Common myeloid progenitor, CD34-positive (primary cell): ENCODE measurements at regions of chr6 and their contacts with region 1.

Region 1: GRCh38 chr6:36765594-36766398 is 68.2 kb downstream of the RAB44 start:
- DNase-seq: peak; percentile 85 to 91 (median 87)
- H3K4me3 ChIP-seq: no peak overlapping the region
- H3K27ac ChIP-seq: no peak overlapping the region
- H3K4me1 ChIP-seq: peaks cover 5 to 27% (median 21%) of the 10 kb centered on the region in 4 experiments
- H3K27me3 ChIP-seq: no peaks in the 10 kb centered on the region

Region 2: GRCh38 chr6:36780442-36781177 is 14.8 kb after region 1 on chr6:
- CTCF ChIA-PET with region 1: interaction called, 59 read pairs
- POLR2A ChIA-PET with region 1: interaction called, 3 read pairs
- DNase-seq: peak; percentile 28 to 83 (median 79)
- H3K4me3 ChIP-seq: no peak overlapping the region
- H3K27ac ChIP-seq: no peak overlapping the region
- H3K4me1 ChIP-seq: peaks cover 4 to 28% (median 10%) of the 10 kb centered on the region in 4 experiments
- H3K27me3 ChIP-seq: peaks cover 0 to 5% (median 0%) of the 10 kb centered on the region in 5 experiments

Region 3: DNA sequence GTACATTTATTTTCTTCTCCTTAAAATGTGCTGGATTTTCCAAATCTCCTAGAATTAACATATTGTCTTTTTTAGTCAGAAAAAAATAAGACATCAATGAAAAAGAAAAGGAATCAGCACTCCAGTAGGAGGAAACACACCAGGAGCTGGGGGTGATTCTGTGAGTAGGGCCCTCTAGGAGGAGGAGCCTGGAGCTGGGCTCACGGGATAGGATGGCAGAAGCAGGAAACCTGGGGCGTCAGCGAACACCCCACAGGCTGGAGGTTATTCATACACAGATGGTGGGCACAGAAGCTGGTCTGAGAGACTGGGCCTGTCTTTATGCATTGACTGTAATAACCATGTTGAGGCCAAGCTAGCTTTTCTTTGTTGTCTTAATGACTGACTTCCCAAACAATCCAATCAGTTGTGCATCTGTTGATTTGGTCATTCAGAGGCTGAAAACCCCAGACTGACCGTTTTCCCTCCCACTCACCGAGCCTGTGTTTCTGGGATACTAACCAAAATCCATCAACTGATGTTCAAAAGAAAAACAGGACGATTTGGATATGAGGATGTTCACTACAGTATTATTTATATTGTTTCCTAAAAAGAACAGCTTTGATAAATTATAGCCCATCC is 20.4 kb after region 1 on chr6:
- CTCF ChIA-PET with region 1: interaction called, 59 read pairs
- POLR2A ChIA-PET with region 1: interaction called, 3 read pairs
- DNase-seq: no peak
- H3K4me3 ChIP-seq: no peak overlapping the region
- H3K27ac ChIP-seq: no peak overlapping the region
- H3K4me1 ChIP-seq: peaks cover 0 to 8% (median 1%) of the 10 kb centered on the region in 4 experiments
- H3K27me3 ChIP-seq: peaks cover 0 to 10% (median 6%) of the 10 kb centered on the region in 5 experiments

Region 4: DNA sequence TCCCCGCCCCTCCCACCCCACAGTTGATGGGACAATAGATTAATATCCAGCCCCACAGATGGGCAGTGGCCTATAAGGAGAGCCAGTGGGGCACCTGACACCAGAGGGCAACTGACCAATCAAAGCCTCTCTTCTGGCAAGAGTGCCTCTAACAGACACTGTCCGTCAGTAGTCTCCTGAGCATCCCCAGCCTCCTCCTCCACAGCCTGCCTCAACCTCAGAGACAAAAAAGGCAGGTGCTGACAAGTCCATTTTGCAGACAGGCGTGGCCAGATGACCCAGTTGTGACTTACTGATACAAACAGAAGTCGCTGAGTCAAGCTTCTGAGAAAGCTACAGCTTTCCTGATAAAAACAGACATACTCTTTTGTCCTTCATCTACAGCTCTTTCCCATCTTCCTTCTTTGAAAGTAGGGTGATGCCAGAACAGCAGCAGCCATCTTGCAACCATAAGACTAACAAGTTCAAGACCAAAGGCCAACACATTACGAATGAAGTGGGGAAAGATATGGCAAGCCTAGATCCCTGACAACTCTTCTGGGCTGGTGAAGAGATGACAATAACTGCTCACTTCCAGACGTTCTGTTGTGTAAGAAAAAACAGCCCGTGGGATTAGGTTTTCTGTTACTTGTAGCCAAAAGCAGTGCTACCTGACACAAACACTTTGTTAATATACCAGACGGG is 96.5 kb after region 1 on chr6:
- CTCF ChIA-PET with region 1: interaction called, 16 read pairs
- POLR2A ChIA-PET with region 1: interaction called, 4 read pairs
- DNase-seq: no peak
- H3K4me3 ChIP-seq: no peak overlapping the region
- H3K27ac ChIP-seq: peak overlapping the region in 1 of 2 experiments; percentile 62
- H3K4me1 ChIP-seq: no peaks in the 10 kb centered on the region
- H3K27me3 ChIP-seq: no peaks in the 10 kb centered on the region

Region 5: DNA sequence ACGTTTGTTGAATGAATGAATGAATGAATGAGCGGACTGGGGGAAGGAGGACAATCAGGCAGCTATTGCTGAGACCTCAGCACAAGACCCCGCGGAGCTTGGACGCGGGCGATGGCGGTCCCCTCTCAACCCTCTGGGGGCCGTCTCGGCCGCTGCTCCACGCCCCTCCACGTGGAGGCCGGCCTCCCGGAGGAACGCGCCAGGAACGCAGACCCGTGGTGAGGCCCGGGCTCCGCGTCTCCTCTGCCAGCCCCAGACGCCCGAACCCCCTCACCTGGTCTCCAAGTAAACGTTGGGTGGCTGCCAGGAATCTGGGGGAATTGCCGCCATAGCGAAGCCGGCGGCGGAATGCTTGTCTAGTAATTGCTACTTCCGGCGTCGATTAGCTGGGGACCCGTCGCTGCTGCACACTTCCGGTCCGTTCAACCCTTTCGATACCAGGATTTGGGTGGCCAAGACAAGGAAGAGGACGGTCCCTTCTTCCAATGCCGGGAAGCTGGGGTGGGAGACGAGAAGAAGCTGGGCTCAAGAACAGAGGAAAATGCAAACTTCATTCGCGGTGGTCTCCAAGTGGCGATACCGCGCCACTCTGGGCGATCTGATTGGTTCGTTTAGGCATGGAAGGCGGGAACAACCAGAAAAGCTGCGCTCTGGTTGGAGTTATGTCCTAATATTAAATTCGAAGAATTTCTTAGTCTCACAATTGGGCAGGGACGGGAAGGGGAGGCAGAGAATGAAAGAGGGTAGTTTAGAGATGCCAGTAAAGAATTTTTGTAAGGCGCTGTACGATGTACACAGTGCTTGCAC is 108.8 kb after region 1 on chr6 and contains the start of gene PPIL1:
- CTCF ChIA-PET with region 1: interaction called, 15 read pairs
- POLR2A ChIA-PET with region 1: no interaction called
- DNase-seq: peak; percentile 92 to 96 (median 94)
- H3K4me3 ChIP-seq: peak within 1 kb of the TSS; percentile 84 to 99 (median 95)
- H3K27ac ChIP-seq: peak within 1 kb of the TSS; percentile 97 to 99
- H3K4me1 ChIP-seq: peaks cover 10 to 26% (median 14%) of the 10 kb centered on the region in 4 experiments
- H3K27me3 ChIP-seq: no peaks in the 10 kb centered on the region